ENCODE measurements at regions of chr11 and their contacts with region 1.

Region 1: DNA sequence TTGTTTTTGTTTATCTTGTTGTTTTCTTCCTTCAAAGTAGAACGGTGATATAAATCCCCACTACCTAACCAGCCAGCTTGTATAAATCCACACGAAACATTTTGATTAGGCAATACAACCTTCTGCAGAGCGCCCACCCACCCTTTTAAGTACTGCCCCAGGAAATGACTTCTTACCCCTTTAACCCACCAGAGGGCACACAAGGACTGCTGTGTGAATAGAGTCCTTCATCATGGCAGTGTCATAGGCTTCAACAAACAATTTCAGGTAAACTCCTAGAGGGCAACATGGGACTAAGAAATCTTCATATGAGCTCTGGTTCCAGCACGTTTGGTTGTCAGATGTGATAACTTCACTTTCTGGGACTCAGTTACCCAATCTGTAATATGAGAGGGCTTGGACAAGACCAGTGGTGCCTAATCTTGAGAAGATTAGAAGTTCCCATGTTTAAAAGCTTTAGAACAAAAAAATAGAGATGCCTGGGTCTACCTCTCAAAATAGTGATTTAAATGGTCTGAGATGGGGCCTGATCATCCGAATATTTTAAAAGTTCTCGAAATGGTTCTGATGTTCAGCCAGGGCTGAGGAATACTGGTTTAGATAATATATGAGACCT is 56.1 kb downstream of the PIWIL4 start:
- DNase-seq: peak; percentile 87 to 92
- H3K4me3 ChIP-seq: no peak overlapping the region
- H3K4me3 Mint-ChIP-seq: no peak overlapping the region
- H3K27ac Mint-ChIP-seq: no peak overlapping the region
- H3K4me1 ChIP-seq: no peaks in the 10 kb centered on the region
- H3K4me1 Mint-ChIP-seq: no peaks in the 10 kb centered on the region
- H3K27me3 ChIP-seq: no peaks in the 10 kb centered on the region
- H3K27me3 Mint-ChIP-seq: no peaks in the 10 kb centered on the region
- CTCF ChIP-seq: peak; percentile 99

Region 2: GRCh38 chr11:94588371-94588952 is 34.8 kb before region 1 on chr11:
- CTCF ChIA-PET with region 1: interaction called, 14 read pairs
- POLR2A ChIA-PET with region 1: no interaction called
- intact Hi-C with region 1: no loop called
- DNase-seq: peak; percentile 87 to 93
- H3K4me3 ChIP-seq: no peak overlapping the region
- H3K4me3 Mint-ChIP-seq: peak overlapping the region; percentile 57
- H3K27ac Mint-ChIP-seq: peak overlapping the region; percentile 34
- H3K4me1 ChIP-seq: peaks cover 61% of the 10 kb centered on the region
- H3K4me1 Mint-ChIP-seq: peaks cover 60% of the 10 kb centered on the region
- H3K27me3 ChIP-seq: no peaks in the 10 kb centered on the region
- H3K27me3 Mint-ChIP-seq: no peaks in the 10 kb centered on the region
- CTCF ChIP-seq: no peak

Region 3: GRCh38 chr11:94734563-94735275 is 111.5 kb after region 1 on chr11:
- CTCF ChIA-PET with region 1: interaction called, 10 read pairs
- POLR2A ChIA-PET with region 1: no interaction called
- intact Hi-C with region 1: no loop called
- DNase-seq: no peak
- H3K4me3 ChIP-seq: no peak overlapping the region
- H3K4me3 Mint-ChIP-seq: no peak overlapping the region
- H3K27ac Mint-ChIP-seq: peak overlapping the region; percentile 7
- H3K4me1 ChIP-seq: peaks cover 55% of the 10 kb centered on the region
- H3K4me1 Mint-ChIP-seq: peaks cover 11% of the 10 kb centered on the region
- H3K27me3 ChIP-seq: no peaks in the 10 kb centered on the region
- H3K27me3 Mint-ChIP-seq: no peaks in the 10 kb centered on the region
- CTCF ChIP-seq: no peak

Region 4: GRCh38 chr11:94767761-94768601 is 144.8 kb after region 1 on chr11 and contains the start of gene AMOTL1:
- CTCF ChIA-PET with region 1: interaction called, 24 read pairs
- POLR2A ChIA-PET with region 1: no interaction called
- intact Hi-C with region 1: loop called (anchors 1 kb)
- DNase-seq: peak; percentile 95 to 96
- H3K4me3 ChIP-seq: peak within 1 kb of the TSS; percentile 75
- H3K4me3 Mint-ChIP-seq: no peak within 1 kb of the TSS
- H3K27ac Mint-ChIP-seq: peak within 1 kb of the TSS; percentile 84
- H3K4me1 ChIP-seq: peaks cover 38% of the 10 kb centered on the region
- H3K4me1 Mint-ChIP-seq: peaks cover 15% of the 10 kb centered on the region
- H3K27me3 ChIP-seq: no peaks in the 10 kb centered on the region
- H3K27me3 Mint-ChIP-seq: no peaks in the 10 kb centered on the region
- CTCF ChIP-seq: no peak
- total RNA-seq, gene AMOTL1: 60.8 and 64.6 TPM in 2 replicates

Region 5: GRCh38 chr11:94840209-94840608 is 217.0 kb after region 1 on chr11:
- CTCF ChIA-PET with region 1: no interaction called
- POLR2A ChIA-PET with region 1: no interaction called
- intact Hi-C with region 1: no loop called
- DNase-seq: no peak
- H3K4me3 ChIP-seq: no peak overlapping the region
- H3K4me3 Mint-ChIP-seq: no peak overlapping the region
- H3K27ac Mint-ChIP-seq: no peak overlapping the region
- H3K4me1 ChIP-seq: peaks cover 12% of the 10 kb centered on the region
- H3K4me1 Mint-ChIP-seq: peaks cover 7% of the 10 kb centered on the region
- H3K27me3 ChIP-seq: no peaks in the 10 kb centered on the region
- H3K27me3 Mint-ChIP-seq: no peaks in the 10 kb centered on the region
- CTCF ChIP-seq: no peak

Region 6: GRCh38 chr11:94877443-94878200 is 254.4 kb after region 1 on chr11:
- CTCF ChIA-PET with region 1: no interaction called
- POLR2A ChIA-PET with region 1: no interaction called
- intact Hi-C with region 1: loop called (anchors 1 kb)
- DNase-seq: no peak
- H3K4me3 ChIP-seq: no peak overlapping the region
- H3K4me3 Mint-ChIP-seq: no peak overlapping the region
- H3K27ac Mint-ChIP-seq: peak overlapping the region; percentile 79
- H3K4me1 ChIP-seq: 0 out of 2 replicates have a peak, but pooled peaks cover 4% of the 10 kb centered on the region
- H3K4me1 Mint-ChIP-seq: peaks cover 7% of the 10 kb centered on the region
- H3K27me3 ChIP-seq: no peaks in the 10 kb centered on the region
- H3K27me3 Mint-ChIP-seq: no peaks in the 10 kb centered on the region
- CTCF ChIP-seq: no peak

Region 7: GRCh38 chr11:95067039-95067840 is 444.0 kb after region 1 on chr11:
- CTCF ChIA-PET with region 1: interaction called, 5 read pairs
- POLR2A ChIA-PET with region 1: no interaction called
- intact Hi-C with region 1: loop called (anchors 1 kb)
- DNase-seq: peak; percentile 88 to 95
- H3K4me3 ChIP-seq: peak overlapping the region; percentile 46
- H3K4me3 Mint-ChIP-seq: peak overlapping the region; percentile 100
- H3K27ac Mint-ChIP-seq: peak overlapping the region; percentile 99
- H3K4me1 ChIP-seq: peaks cover 12% of the 10 kb centered on the region
- H3K4me1 Mint-ChIP-seq: peaks cover 15% of the 10 kb centered on the region
- H3K27me3 ChIP-seq: no peaks in the 10 kb centered on the region
- H3K27me3 Mint-ChIP-seq: peaks cover 12% of the 10 kb centered on the region
- CTCF ChIP-seq: peak; percentile 52 to 98